ENCODE measurements at regions of chr11 and their contacts with region 1.

Region 1: DNA sequence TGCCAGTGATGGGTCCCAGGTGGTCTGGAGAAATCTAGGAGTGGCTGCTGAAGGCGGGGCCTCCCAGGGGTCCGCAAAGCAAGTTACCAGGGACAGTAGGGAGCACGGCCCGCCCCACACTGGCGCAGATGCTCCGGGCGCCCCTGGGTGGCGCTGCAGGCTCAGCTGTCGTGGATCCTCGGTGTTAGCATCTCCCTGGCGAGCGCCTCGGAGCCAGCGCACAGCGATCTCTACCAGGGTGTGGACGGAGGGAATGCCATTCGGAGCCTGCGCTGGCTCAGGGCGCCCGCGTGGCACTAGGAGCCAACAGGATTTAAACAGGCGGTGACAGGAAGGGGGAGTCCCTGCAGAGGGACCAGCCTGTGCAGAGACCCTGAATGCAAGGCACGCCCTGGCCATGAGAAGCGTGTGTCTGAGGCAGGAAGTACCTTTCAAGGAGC is 20.2 kb downstream of the FADS3 start:
- DNase-seq: peak; percentile 91
- ATAC-seq: peak; percentile 86

Region 2: DNA sequence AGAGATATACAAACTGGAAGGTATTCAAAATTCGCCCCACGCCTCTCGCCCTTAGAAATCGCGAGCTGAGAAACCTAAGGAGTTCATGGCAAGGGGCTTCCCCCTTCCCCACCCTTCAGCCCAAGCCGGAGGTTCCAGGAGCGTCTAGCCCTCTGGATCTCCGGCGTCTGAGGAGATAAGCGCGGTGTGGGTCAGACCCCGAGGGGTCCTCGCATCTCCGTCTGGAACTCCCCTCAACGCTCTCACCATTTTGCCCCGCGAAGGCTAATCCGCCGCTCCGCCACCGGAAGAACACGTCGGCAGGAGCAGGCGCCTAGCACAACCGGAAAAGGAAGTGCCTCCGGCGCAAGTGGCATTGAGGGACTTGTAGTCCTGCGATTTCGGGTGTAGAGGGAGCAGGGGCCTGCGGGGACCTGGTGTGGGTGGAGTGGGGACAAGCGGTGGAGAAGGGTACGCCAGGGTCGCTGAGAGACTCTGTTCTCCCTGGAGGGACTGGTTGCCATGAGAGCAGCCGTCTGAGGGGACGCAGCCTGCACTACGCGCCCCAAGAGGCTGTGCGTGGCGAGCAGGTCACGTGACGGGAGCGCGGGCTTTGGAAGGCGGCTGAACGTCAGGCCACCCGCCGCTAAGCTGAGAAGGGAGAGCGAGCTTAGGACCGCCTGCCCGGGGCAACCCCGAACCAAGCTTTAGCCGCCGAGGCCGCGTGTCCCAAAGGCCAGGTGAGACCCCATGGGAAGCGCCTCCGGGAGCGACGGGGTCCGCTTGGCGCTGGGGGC is 78.7 kb before region 1 on chr11 and contains the starts of genes FEN1 and TMEM258:
- intact Hi-C with region 1: loop called (anchors 2 kb)
- DNase-seq: peak; percentile 95
- ATAC-seq: peak; percentile 93
- total RNA-seq, gene FEN1: 7.0 TPM
- total RNA-seq, gene TMEM258: 130 TPM

Region 3: GRCh38 chr11:61891331-61892084 is 20.3 kb after region 1 on chr11 and contains the start of gene FADS3:
- intact Hi-C with region 1: loop called (anchors 2 kb)
- DNase-seq: peak; percentile 94
- ATAC-seq: peak; percentile 90
- total RNA-seq, gene FADS3: 113 TPM

Region 4: DNA sequence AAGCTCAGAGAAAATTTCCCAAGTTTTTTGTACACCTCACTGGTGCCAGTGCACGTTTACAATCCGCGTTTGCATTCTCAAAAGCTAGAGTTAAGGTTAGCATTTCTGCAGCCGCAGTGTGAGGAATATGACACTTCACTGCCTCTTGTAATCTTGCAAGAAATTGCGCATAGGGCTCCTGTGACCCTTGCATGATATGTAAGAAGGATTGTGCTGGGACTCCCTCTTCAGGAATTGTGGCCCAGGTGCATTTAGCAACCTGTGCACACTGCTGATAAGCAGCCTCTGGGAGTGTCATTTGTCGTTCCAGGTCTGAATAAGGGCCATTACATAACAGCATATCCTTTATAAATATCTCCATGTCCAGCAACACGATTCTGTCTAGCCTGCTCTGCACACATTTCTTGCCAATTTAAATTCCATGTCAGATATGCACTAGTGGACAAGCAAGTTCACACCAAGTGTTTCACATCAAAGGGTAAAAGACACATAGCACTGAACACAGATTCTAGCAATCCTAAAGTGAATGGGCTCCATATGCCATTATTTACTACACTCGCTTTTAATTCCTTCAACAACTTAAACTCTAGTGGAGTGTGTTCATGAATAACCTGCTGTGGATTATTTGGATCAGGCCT is 183.4 kb after region 1 on chr11:
- intact Hi-C with region 1: no loop called
- DNase-seq: no peak
- ATAC-seq: no peak